T-cell (primary cell): ENCODE measurements at regions of chrX and their contacts with region 1.

Region 1: DNA sequence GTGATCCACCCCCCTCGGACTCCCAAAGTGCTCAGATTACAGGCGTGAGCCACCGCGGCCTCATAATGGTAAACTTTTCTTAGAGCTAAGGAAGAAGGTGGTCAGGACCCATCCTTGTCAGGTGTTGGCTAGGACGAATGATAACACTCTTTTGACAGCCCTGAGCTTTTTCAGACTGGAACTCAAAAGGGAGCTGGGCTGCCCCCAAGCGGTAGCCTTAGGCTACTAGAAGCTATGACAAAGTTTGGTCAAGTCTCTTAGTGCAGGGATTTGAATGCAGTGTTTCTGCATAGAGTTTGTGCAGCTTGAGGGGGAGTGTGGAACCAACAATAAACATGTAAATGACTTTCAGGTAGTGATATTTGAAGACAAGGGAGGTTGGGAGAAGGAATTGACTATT is 11.8 kb upstream of the HSD17B10 start:
- DNase-seq: peak in 26 of 35 experiments; percentile 7 to 56 (median 34)
- ATAC-seq: peak in 2 of 4 experiments; percentile 29 to 50
- H3K4me3 ChIP-seq: no peak overlapping the region
- H3K4me3 Mint-ChIP-seq: no peak overlapping the region
- H3K27ac ChIP-seq: no peak overlapping the region
- H3K27ac Mint-ChIP-seq: no peak overlapping the region
- H3K4me1 ChIP-seq: peaks cover 0 to 12% of the 10 kb centered on the region in 2 experiments
- H3K4me1 Mint-ChIP-seq: peaks cover 0 to 10% (median 5%) of the 10 kb centered on the region in 3 donors
- H3K27me3 ChIP-seq: peaks cover 0 to 4% of the 10 kb centered on the region in 2 experiments
- H3K27me3 Mint-ChIP-seq: peaks cover 0 to 8% of the 10 kb centered on the region in 2 donors

Region 2: GRCh38 chrX:53458082-53458481 is 12.1 kb after region 1 on chrX:
- CTCF ChIA-PET with region 1: interaction called in 1 of 2 experiments, 11 read pairs
- POLR2A ChIA-PET with region 1: interaction called in 1 of 2 experiments, 5 read pairs
- DNase-seq: no peak
- ATAC-seq: no peak
- H3K4me3 ChIP-seq: no peak overlapping the region
- H3K4me3 Mint-ChIP-seq: no peak overlapping the region
- H3K27ac ChIP-seq: no peak overlapping the region
- H3K27ac Mint-ChIP-seq: peak overlapping the region in 1 of 2 donors; percentile 27
- H3K4me1 ChIP-seq: no peaks in the 10 kb centered on the region
- H3K4me1 Mint-ChIP-seq: peaks cover 0 to under 1% (median 0%) of the 10 kb centered on the region in 3 donors
- H3K27me3 ChIP-seq: no peaks in the 10 kb centered on the region
- H3K27me3 Mint-ChIP-seq: peaks cover 5 to 27% of the 10 kb centered on the region in 2 donors